A549 (cell line): ENCODE measurements at regions of chr16 and their contacts with region 1.

Region 1: DNA sequence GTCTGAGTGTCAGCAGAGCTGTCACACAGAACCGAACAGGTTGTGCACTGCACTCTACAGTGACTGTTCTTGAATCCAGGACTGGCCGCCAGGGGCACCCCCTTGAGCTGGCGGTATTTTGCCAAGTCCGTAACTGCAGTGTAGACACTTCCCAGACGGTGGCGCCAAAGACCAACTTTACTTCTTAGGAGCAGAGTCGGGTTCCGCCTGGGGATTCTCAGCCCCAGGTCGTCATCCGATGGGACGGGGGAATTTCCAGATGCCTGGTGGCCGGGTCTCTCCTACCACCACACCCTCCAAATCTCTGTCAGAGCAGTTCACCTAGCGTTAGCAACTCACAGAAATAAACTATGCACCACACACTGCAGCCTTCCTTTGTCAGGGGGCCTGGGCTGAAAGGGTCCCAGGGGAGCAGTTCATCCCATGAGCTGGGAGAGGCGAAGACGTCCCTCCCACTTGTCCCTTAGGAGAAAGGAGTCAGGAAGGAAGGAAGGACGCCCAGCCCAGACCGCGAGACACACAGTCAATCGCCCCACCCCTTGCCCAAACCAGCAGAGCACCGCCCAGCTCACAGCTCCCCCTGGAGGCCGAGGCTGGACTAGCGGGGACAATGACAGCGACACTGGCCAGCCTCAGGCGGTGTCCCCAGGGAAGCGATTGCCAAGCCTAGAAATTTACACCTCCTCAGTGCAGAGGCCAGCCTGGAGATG is 7.4 kb upstream of the RIPOR1 start:
- DNase-seq: peak; percentile 94 to 96
- ATAC-seq: peak; percentile 88 to 91
- H3K4me3 ChIP-seq: peak overlapping the region; percentile 64
- H3K27ac ChIP-seq: peak overlapping the region; percentile 92 to 95
- H3K4me1 ChIP-seq: peaks cover 52% of the 10 kb centered on the region
- CTCF ChIP-seq: peak; percentile 93
- EP300 ChIP-seq: no peak
- POLR2A ChIP-seq: peak; percentile 80
- RAD21 ChIP-seq: peak; percentile 93 to 95

Region 2: GRCh38 chr16:67399181-67399733 is 122.0 kb before region 1 on chr16:
- CTCF ChIA-PET with region 1: no interaction called
- POLR2A ChIA-PET with region 1: no interaction called
- DNase-seq: peak; percentile 37 to 52
- ATAC-seq: peak; percentile 51 to 83
- H3K4me3 ChIP-seq: no peak overlapping the region
- H3K27ac ChIP-seq: no peak overlapping the region
- H3K4me1 ChIP-seq: peaks cover 15% of the 10 kb centered on the region
- CTCF ChIP-seq: peak; percentile 62
- EP300 ChIP-seq: no peak
- POLR2A ChIP-seq: no peak
- RAD21 ChIP-seq: peak; percentile 63 to 70

Region 3: GRCh38 chr16:67499106-67499505 is 22.1 kb before region 1 on chr16:
- CTCF ChIA-PET with region 1: interaction called, 278 read pairs
- POLR2A ChIA-PET with region 1: interaction called, 3 read pairs
- DNase-seq: no peak
- ATAC-seq: no peak
- H3K4me3 ChIP-seq: no peak overlapping the region
- H3K27ac ChIP-seq: no peak overlapping the region
- H3K4me1 ChIP-seq: peaks cover under 1% of the 10 kb centered on the region; the same call in 1 of the 3 replicates
- CTCF ChIP-seq: no peak
- EP300 ChIP-seq: no peak
- POLR2A ChIP-seq: no peak
- RAD21 ChIP-seq: no peak

Region 4: DNA sequence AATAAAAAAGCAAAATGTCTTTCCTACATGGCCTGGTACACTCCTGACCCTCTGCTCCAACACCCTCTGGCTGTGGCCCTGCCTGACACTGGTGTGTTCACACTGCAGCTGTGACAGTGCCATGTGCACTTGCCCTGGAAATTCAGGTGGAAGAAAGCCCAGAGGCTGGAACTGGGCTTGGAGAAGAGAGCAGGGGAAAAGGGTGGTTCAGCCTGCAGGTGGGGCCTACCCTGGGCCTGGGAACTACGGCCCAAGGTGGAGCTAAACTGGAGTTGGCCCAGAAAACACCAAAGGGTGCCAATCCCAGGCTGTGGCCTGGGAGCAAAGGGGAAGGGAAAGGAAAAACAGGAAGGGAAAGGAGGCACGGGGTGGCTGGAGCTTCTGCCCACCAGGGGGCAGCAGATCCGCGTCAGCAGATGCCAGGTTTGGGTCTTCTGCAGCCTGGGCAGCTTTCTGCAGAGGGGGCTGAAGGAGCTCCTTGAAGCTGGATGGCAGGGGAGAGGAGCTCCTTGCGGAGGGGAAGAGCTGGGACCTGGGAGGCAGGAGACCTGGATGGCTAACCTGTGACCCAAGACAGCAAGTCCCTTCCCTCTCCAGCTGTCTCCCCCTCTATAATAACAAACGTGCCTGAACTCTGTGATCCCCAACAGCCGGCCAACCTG is 25.6 kb after region 1 on chr16:
- CTCF ChIA-PET with region 1: interaction called, 301 read pairs
- POLR2A ChIA-PET with region 1: interaction called, 5 read pairs
- DNase-seq: peak; percentile 73 to 85
- ATAC-seq: peak; percentile 74 to 84
- H3K4me3 ChIP-seq: no peak overlapping the region
- H3K27ac ChIP-seq: 0 out of 6 replicates have a peak overlapping the region, but pooled peaks of 1 of the 2 experiments have one; percentile 14
- H3K4me1 ChIP-seq: peaks cover under 1% of the 10 kb centered on the region; the same call in 1 of the 3 replicates
- CTCF ChIP-seq: peak; percentile 93
- EP300 ChIP-seq: no peak
- POLR2A ChIP-seq: no peak
- RAD21 ChIP-seq: peak; percentile 81 to 85

Region 5: DNA sequence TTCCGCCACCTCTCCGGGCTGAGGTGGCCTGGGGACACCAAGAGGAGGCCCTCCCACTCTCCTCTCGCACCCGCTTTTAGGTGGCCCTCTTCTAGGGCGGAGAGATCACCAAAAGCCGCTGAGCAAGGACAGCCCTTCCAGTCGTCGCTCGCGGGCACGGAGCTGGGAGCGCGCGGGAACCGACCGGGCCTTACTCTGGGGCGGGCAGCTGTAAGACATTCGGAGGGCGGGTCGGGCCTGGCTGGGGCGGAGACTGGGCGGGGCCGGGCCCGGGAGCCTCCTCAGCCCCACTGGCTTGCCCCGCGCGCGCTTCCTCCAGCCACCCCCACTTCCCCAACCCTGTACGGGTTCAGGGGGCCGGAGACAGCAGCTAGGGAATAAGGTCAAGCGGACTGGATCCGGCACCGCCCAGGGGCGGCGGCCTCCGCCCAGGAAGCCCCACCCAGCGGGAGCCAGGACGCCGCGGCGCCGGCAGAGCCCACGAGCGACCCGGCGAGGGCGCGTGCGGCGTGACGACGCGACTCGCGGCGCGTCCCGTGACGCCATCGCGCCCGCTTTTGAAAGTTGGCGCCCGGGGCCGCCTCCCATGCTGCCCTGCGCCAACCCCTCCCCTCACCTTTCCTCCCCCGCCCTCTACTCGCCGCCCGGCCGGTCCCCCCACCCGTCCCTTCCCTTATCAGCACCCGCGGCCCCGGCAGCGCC is 40.7 kb after region 1 on chr16:
- CTCF ChIA-PET with region 1: interaction called, 57 read pairs
- POLR2A ChIA-PET with region 1: interaction called, 8 read pairs
- DNase-seq: peak; percentile 80 to 96
- ATAC-seq: peak; percentile 87 to 96
- H3K4me3 ChIP-seq: peak overlapping the region; percentile 87
- H3K27ac ChIP-seq: peak overlapping the region; percentile 99 to 100
- H3K4me1 ChIP-seq: peaks cover 17% of the 10 kb centered on the region
- CTCF ChIP-seq: no peak
- EP300 ChIP-seq: no peak
- POLR2A ChIP-seq: peak; percentile 78
- RAD21 ChIP-seq: no peak

Region 6: GRCh38 chr16:67580202-67580601 is 59.0 kb after region 1 on chr16:
- CTCF ChIA-PET with region 1: no interaction called
- POLR2A ChIA-PET with region 1: no interaction called
- DNase-seq: no peak
- ATAC-seq: no peak
- H3K4me3 ChIP-seq: no peak overlapping the region
- H3K27ac ChIP-seq: no peak overlapping the region
- H3K4me1 ChIP-seq: no peaks in the 10 kb centered on the region
- CTCF ChIP-seq: no peak
- EP300 ChIP-seq: no peak
- POLR2A ChIP-seq: no peak
- RAD21 ChIP-seq: no peak

Region 7: GRCh38 chr16:67653128-67653786 is 132.0 kb after region 1 on chr16:
- CTCF ChIA-PET with region 1: interaction called, 205 read pairs
- POLR2A ChIA-PET with region 1: no interaction called
- DNase-seq: no peak
- ATAC-seq: peak; percentile 29 to 36; a peak in 3 of 6 replicates
- H3K4me3 ChIP-seq: peak overlapping the region; percentile 58
- H3K27ac ChIP-seq: peak overlapping the region in 1 of 2 experiments; percentile 46; a peak in 4 of 6 replicates
- H3K4me1 ChIP-seq: peaks cover 9% of the 10 kb centered on the region; the same call in 2 of the 3 replicates
- CTCF ChIP-seq: no peak
- EP300 ChIP-seq: no peak
- POLR2A ChIP-seq: no peak
- RAD21 ChIP-seq: no peak

Region 8: DNA sequence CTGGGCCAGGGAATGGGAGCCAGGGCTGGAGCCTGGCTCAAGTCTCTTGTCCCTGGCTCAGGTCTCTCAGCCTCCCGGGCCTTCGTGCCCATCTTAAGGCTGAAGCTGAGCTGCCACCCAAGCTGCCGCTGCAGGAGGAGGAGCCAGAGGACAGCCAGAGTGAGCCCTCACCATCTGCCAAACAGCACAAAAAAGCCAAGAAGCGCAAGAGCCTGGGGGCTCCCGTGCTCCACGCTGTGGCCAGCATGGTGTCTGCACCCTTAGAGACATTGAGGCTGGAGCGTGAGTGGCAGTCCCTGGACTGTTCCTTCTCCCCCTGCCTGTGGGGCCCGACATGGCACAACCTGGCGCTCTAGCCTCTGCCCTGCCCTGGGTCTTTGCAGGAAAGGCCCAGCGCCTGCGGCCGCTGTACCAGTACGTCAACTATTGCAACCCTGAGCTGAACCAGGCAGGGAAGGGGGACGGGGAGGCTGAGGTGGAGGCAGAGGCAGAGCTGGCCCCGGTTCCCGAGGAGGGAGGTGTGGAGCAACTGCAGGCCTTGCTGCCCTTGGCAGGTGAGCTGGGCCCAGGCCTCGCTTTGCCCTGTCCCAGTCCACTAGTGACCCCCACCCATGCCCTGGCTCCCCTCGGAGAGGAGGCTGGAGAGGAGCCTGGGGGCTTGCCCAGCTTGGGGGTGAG is 146.7 kb after region 1 on chr16:
- CTCF ChIA-PET with region 1: interaction called, 174 read pairs
- POLR2A ChIA-PET with region 1: no interaction called
- DNase-seq: peak; percentile 93 to 98
- ATAC-seq: peak; percentile 86 to 92
- H3K4me3 ChIP-seq: no peak overlapping the region
- H3K27ac ChIP-seq: peak overlapping the region in 1 of 2 experiments; percentile 55; a peak in 3 of 6 replicates
- H3K4me1 ChIP-seq: peaks cover 17% of the 10 kb centered on the region
- CTCF ChIP-seq: peak; percentile 69
- EP300 ChIP-seq: no peak
- POLR2A ChIP-seq: no peak
- RAD21 ChIP-seq: peak; percentile 57 to 65

Region 9: DNA sequence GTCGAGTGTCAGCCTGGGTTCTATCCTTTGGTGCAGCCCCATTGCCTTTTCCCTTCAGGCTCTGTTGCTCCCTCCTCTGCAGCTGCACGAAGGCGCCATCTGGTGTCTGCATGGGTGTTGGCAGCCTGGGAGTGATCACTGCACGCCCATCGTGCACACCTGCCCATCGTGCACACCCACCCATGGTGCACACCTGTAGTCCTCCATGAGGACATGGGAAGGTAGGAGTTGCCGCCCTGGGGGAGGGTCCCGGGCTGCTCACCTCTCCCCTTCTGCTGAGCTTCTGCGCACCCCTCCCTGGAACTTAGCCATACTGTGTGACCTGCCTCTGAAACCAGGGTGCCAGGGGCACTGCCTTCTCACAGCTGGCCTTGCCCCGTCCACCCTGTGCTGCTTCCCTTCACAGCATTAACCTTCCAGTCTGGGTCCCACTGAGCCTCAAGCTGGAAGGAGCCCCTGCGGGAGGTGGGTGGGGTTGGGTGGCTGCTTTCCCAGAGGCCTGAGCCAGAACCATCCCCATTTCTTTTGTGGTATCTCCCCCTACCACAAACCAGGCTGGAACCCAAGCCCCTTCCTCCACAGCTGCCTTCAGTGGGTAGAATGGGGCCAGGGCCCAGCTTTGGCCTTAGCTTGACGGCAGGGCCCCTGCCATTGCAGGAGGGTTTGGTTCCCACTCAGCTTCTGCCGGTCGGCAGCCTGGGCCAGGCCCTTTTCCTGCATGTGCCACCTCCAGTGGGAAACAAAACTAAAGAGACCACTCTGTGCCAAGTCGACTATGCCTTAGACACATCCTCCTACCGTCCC is 407.5 kb after region 1 on chr16:
- CTCF ChIA-PET with region 1: interaction called, 13 read pairs
- POLR2A ChIA-PET with region 1: no interaction called
- DNase-seq: peak; percentile 66 to 91
- ATAC-seq: peak; percentile 70 to 88
- H3K4me3 ChIP-seq: no peak overlapping the region
- H3K27ac ChIP-seq: no peak overlapping the region
- H3K4me1 ChIP-seq: no peaks in the 10 kb centered on the region
- CTCF ChIP-seq: peak; percentile 87
- EP300 ChIP-seq: no peak
- POLR2A ChIP-seq: no peak
- RAD21 ChIP-seq: peak; percentile 80 to 90